ENCODE measurements at regions of chr7 and their contacts with region 1.

Region 1: DNA sequence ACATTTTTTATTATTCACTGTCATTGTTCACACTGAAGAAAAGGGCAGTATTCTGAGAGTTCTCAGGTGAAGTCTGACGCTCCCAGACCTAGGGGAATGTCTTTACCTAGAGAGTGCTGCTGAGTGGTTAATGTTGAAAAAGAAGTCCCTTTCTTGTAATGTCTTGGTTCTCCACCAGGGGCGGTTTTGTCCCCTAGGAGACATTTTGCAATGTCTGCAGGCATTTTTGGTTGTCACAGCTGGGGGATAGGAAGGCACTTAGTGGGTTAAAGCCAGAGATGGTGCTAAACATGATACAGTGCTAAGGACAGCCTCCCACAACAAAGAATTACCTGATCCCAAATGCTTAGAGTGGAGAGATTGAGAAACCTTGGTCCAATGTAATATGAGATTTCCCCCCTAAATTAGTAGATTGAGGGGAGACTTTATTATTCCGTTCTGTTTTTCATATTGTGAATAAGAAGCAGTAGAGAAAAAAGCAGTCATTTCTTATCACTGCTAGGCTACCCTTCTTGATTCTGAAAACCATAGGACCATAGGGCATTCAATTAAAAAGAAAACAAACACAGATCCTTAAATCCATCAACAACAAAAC is 13.1 kb downstream of the UMAD1 start:
- DNase-seq: no peak
- ATAC-seq: no peak
- H3K4me3 Mint-ChIP-seq: no peak overlapping the region
- H3K27ac Mint-ChIP-seq: no peak overlapping the region
- H3K4me1 Mint-ChIP-seq: peaks cover 39% of the 10 kb centered on the region
- H3K27me3 Mint-ChIP-seq: no peaks in the 10 kb centered on the region
- CTCF ChIP-seq: no peak

Region 2: GRCh38 chr7:7424151-7424873 is 229.4 kb before region 1 on chr7:
- CTCF ChIA-PET with region 1: no interaction called
- POLR2A ChIA-PET with region 1: no interaction called
- intact Hi-C with region 1: no loop called
- DNase-seq: no peak
- ATAC-seq: peak; percentile 75
- H3K4me3 Mint-ChIP-seq: peak overlapping the region; percentile 86
- H3K27ac Mint-ChIP-seq: peak overlapping the region; percentile 37
- H3K4me1 Mint-ChIP-seq: peaks cover 6% of the 10 kb centered on the region
- H3K27me3 Mint-ChIP-seq: no peaks in the 10 kb centered on the region
- CTCF ChIP-seq: no peak

Region 3: DNA sequence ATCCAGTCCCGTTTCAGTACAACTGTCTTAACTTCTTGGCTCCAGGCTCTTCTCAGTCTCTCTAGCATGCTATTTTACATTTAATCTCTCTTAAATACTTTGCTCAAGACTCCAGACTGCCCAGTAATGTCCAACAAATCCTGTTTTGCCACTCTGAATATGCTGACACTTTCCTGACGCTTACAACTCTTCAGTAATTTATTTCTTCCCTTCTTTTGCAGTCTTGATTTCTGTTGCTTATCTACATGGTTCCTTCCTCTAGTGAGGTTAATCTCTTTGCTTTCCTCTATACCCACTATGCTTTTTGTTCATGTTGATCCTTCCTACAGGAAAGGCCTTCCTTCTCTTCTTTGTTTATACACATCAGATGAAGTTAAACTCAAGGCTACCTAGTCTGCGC is 10.6 kb after region 1 on chr7:
- CTCF ChIA-PET with region 1: no interaction called
- POLR2A ChIA-PET with region 1: interaction called, 10 read pairs
- intact Hi-C with region 1: no loop called
- DNase-seq: no peak
- ATAC-seq: no peak
- H3K4me3 Mint-ChIP-seq: no peak overlapping the region
- H3K27ac Mint-ChIP-seq: no peak overlapping the region
- H3K4me1 Mint-ChIP-seq: peaks cover 19% of the 10 kb centered on the region
- H3K27me3 Mint-ChIP-seq: no peaks in the 10 kb centered on the region
- CTCF ChIP-seq: no peak

Region 4: DNA sequence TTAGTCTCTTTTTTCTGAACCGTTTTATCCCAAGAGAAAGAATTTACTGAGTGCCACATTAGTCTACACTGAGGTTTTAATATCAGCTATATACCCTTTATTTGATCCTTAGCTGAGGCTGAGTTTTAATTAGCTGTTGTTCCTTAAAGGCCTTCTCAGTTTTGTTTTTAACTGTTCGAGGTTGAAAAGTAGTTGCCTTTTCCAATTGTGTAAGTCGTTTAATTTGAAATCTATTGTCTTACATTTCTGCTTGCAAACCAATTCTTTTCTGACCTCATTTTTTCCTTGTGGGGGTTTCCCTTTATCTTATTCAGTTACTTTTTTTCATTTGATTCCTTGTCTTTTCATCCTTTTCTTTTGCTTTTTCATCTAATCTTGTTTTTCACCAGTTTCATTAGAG is 17.7 kb after region 1 on chr7:
- CTCF ChIA-PET with region 1: no interaction called
- POLR2A ChIA-PET with region 1: no interaction called
- intact Hi-C with region 1: loop called (anchors 2 kb)
- DNase-seq: no peak
- ATAC-seq: no peak
- H3K4me3 Mint-ChIP-seq: no peak overlapping the region
- H3K27ac Mint-ChIP-seq: peak overlapping the region; percentile 26
- H3K4me1 Mint-ChIP-seq: peaks cover 34% of the 10 kb centered on the region
- H3K27me3 Mint-ChIP-seq: no peaks in the 10 kb centered on the region
- CTCF ChIP-seq: no peak